Common myeloid progenitor, CD34-positive (primary cell): ENCODE measurements at regions of chr1 and their contacts with region 1.

Region 1: GRCh38 chr1:11907275-11908094 is 18.7 kb downstream of the KIAA2013 start:
- DNase-seq: peak; percentile 96 to 98 (median 98)
- H3K4me3 ChIP-seq: peak overlapping the region in 4 of 7 experiments; percentile 5 to 85 (median 54)
- H3K27ac ChIP-seq: peak overlapping the region; percentile 100
- H3K4me1 ChIP-seq: peaks cover 0 to 14% (median 9%) of the 10 kb centered on the region in 4 experiments
- H3K27me3 ChIP-seq: no peaks in the 10 kb centered on the region

Region 2: GRCh38 chr1:11838349-11839272 is 68.9 kb before region 1 on chr1:
- CTCF ChIA-PET with region 1: interaction called, 22 read pairs
- POLR2A ChIA-PET with region 1: interaction called, 41 read pairs
- DNase-seq: peak; percentile 56 to 78 (median 70)
- H3K4me3 ChIP-seq: no peak overlapping the region
- H3K27ac ChIP-seq: no peak overlapping the region
- H3K4me1 ChIP-seq: peaks cover 8 to 37% (median 33%) of the 10 kb centered on the region in 4 experiments
- H3K27me3 ChIP-seq: no peaks in the 10 kb centered on the region

Region 3: DNA sequence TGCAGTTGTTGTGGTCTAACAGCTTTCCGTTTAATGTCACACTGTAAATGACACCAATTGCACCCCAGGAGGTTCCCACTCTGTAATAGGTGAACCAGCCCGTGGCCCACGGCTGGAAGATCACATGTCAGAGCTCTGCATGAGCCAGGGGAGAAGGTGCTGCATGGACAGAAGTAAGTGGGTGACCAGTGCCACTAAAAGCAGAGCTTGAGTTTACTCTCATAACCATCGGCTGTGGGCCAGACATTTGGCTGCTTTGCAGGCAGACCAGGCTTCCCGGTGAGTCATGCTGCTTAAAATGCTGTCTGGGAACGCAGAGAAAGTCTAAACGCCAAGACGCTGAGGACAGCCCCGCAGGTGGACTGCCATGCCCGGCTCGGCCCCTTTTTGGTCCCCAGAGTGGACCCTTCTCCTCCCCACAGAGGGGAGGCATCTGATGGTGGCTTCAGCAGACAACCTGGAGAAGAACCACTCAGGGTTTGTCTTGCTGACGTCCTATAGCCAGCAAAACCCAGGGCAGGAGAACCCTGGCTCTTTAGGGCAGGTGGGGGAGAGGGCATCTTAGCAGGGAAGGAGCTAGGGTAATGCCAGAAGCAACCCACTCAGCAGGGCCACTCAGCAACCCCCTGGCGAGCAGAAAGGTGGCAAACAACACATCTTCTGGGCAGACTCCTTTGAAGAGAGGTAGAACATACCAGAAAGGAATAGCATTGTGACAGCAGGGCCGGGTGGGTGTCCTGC is 11.5 kb after region 1 on chr1:
- CTCF ChIA-PET with region 1: interaction called, 3 read pairs
- POLR2A ChIA-PET with region 1: interaction called, 38 read pairs
- DNase-seq: no peak
- H3K4me3 ChIP-seq: no peak overlapping the region
- H3K27ac ChIP-seq: no peak overlapping the region
- H3K4me1 ChIP-seq: peaks cover 0 to 7% (median 5%) of the 10 kb centered on the region in 4 experiments
- H3K27me3 ChIP-seq: no peaks in the 10 kb centered on the region

Region 4: GRCh38 chr1:11925938-11926292 is 18.4 kb after region 1 on chr1:
- CTCF ChIA-PET with region 1: no interaction called
- POLR2A ChIA-PET with region 1: interaction called, 38 read pairs
- DNase-seq: peak in 1 of 3 donors; percentile 20
- H3K4me3 ChIP-seq: peak overlapping the region; percentile 46 to 79 (median 68)
- H3K27ac ChIP-seq: no peak overlapping the region
- H3K4me1 ChIP-seq: peaks cover 11 to 32% (median 28%) of the 10 kb centered on the region in 4 experiments
- H3K27me3 ChIP-seq: no peaks in the 10 kb centered on the region

Region 5: GRCh38 chr1:11979851-11980675 is 72.6 kb after region 1 on chr1 and contains the start of gene MFN2:
- CTCF ChIA-PET with region 1: interaction called, 16 read pairs
- POLR2A ChIA-PET with region 1: interaction called, 74 read pairs
- DNase-seq: peak; percentile 97 to 99 (median 98)
- H3K4me3 ChIP-seq: peak within 1 kb of the TSS; percentile 82 to 99 (median 93)
- H3K27ac ChIP-seq: peak within 1 kb of the TSS; percentile 88 to 92
- H3K4me1 ChIP-seq: peaks cover 3 to 31% (median 17%) of the 10 kb centered on the region in 4 experiments
- H3K27me3 ChIP-seq: no peaks in the 10 kb centered on the region

Region 6: DNA sequence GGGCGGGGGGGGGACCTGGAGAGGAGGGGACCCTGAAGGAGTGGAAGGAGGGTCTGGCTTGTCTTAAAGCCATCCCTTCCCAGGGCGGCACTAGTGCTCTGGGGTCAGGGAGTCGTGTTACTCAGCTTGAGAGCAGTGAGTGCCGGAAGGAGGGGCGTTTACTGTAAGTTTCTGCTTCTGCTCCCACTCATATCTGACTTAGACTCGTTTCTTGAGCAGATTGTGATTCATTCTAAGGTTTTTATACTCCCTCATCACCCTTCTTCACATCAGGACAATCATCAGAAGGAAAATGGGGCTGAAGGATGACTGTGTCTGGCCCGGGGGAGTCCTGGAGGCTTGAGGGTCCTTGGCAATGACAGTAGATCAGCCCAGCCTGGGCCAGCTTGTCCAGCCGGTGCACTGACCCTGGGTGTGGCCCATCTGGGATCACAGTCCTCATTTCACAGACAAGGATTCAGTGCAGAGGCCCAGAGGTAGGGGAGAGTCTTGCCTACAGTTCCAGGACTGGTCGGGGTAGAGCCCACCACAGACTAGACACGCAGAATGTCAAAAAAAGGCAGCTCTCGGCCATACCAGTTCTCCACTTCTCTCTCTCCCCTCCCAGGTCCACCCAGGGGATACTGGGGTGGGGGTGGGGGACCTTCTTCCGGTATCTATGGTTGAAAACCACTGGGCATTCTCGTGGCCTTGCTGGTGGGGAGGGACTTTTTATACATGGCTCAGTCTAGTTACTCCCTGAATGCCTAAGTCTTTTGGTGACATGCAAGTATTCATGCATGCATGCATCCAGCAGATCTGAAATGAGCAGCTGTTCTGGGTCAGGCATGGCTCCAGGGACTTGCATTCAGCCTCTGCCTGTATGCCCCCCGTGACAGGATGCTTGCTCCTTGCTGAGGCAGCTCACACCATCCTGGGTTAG is 160.7 kb after region 1 on chr1:
- CTCF ChIA-PET with region 1: no interaction called
- POLR2A ChIA-PET with region 1: no interaction called
- DNase-seq: no peak
- H3K4me3 ChIP-seq: no peak overlapping the region
- H3K27ac ChIP-seq: no peak overlapping the region
- H3K4me1 ChIP-seq: peaks cover 11 to 54% (median 47%) of the 10 kb centered on the region in 4 experiments
- H3K27me3 ChIP-seq: peaks cover 0 to 17% (median 10%) of the 10 kb centered on the region in 5 experiments